ENCODE measurements at regions of chr5 and their contacts with region 1.

Region 1: GRCh38 chr5:130135506-130135905 is 231.2 kb downstream of the CHSY3 start:
- DNase-seq: no peak
- ATAC-seq: peak; percentile 69
- H3K4me3 ChIP-seq: no peak overlapping the region
- H3K27ac ChIP-seq: no peak overlapping the region
- H3K4me1 ChIP-seq: peaks cover 0 to 6% of the 10 kb centered on the region in 2 donors
- H3K27me3 ChIP-seq: no peaks in the 10 kb centered on the region

Region 2: DNA sequence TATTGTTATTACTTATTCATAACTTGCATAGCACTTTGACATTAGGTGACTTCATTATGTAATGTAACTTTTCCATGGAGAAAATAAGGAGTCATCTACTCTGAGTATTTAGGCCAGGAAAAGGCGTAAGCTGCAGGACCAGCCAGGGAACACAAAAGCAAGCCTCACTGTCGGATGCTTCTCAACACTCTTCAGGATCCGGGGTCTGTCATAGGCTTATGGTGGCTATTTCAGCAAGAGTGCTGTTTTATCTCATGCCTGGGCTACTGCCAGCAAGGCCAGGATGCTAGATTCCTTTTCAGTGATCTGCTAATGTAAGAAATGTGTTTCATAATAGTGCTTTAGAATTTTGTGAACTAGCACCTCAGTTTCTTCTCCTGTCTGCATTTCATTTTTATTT is 68.9 kb before region 1 on chr5:
- intact Hi-C with region 1: loop called in 1 of 2 experiments (anchors 10 kb)
- DNase-seq: peak in 1 of 2 donors; percentile 64
- ATAC-seq: peak; percentile 58
- H3K4me3 ChIP-seq: no peak overlapping the region
- H3K27ac ChIP-seq: peak overlapping the region in 1 of 2 donors; percentile 16
- H3K4me1 ChIP-seq: peaks cover 1 to 3% of the 10 kb centered on the region in 2 donors
- H3K27me3 ChIP-seq: no peaks in the 10 kb centered on the region

Region 3: DNA sequence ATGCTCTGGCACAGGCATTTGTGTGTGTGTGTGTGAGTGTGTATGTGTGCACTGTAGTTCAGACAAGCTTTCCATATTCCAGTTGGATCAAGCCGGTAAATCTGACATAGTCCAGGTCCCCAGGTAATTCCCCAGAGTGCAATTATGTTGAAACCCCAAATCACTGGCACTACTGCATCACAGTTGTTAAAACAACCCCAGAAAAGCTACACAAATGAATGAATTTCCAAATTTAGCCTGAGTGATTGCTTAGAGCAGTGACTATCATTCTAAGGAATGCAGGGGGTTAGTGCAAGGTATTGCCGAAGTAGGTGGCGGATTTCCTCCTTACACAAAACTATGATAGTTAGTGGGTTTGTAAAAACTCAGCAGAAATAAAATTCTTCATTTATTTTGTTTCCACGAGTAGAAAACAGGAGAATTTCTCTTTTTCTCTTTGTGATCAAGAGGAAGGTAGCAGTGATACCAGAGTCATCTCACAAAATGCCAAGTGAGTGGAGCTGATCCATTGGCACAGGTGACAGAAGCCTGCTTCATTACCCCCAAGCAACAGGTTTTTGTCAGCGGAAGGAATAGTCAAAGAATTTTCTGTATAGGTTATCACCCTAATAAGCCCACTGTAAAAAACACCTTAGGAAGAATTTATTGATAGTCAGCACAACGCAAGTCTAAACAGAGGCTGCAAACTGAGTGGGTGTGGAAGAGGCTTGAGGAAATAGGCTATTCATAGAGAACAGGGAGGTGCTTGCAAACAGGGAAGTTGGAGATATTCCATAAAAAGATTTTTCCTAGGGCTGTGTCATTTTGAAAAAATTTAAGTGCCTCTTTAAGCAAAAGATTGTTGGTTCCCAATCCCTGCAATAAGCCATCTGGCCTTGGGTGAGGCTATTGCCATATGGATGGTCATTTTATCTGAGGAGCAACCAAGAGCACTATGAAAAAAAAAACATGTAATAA is 153.9 kb after region 1 on chr5:
- intact Hi-C with region 1: loop called in 1 of 2 experiments (anchors 10 kb)
- DNase-seq: no peak
- ATAC-seq: no peak
- H3K4me3 ChIP-seq: no peak overlapping the region
- H3K27ac ChIP-seq: peak overlapping the region in 1 of 2 donors; percentile 63
- H3K4me1 ChIP-seq: peaks cover 0 to 4% of the 10 kb centered on the region in 2 donors
- H3K27me3 ChIP-seq: no peaks in the 10 kb centered on the region

Measured in aorta (tissue), 5 donors.